Activated CD8-positive, alpha-beta T cell treated with anti-CD3 and anti-CD28 coated beads for 36 hours (primary cell): ENCODE measurements at regions of chr2 and their contacts with region 1.

Region 1: DNA sequence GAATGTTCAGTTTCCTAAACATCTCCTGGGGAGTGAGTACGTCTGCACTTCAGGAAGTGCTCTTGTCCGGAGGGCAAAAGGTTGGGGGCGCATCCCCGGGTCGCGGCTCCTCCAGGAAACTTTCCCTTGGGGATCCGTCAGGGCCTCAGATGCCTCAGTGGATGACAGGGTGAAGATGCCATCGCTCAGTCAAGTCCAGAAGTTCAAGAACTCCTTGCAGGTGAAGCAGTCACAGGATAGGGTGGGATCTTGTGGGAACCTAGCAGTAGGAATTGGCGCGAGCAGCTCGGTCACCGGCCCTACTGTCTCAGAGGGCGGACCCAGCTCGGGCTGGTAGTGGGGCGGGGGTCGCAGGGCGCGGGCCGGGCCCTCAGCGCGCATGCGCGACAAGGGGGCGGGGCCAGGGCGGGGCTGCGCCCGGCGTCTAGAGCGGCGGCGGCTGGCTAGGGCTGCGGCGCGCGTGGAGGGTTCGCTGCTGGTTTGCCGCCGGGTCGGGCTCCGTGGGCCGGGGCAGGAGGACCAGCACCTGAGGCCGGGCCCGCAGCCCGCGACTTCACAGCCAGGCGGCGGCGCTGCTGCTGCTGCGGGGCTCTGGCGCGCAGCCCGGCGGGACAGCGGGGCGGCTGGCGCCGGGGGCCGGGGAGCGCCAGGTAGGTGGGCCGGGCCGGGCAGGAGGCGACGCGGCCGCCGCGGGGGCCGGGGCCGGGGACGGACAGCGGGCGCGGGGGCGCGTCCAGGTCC is at the start of gene INPP4A:
- DNase-seq: peak; percentile 73
- ATAC-seq: peak; percentile 73
- H3K4me3 Mint-ChIP-seq: peak within 1 kb of the TSS; percentile 81
- H3K27ac Mint-ChIP-seq: peak within 1 kb of the TSS; percentile 90
- H3K4me1 Mint-ChIP-seq: peaks cover 34% of the 10 kb centered on the region
- H3K27me3 Mint-ChIP-seq: no peaks in the 10 kb centered on the region
- CTCF ChIP-seq: no peak
- total RNA-seq, gene INPP4A: 46.7 to 46.9 TPM

Region 2: DNA sequence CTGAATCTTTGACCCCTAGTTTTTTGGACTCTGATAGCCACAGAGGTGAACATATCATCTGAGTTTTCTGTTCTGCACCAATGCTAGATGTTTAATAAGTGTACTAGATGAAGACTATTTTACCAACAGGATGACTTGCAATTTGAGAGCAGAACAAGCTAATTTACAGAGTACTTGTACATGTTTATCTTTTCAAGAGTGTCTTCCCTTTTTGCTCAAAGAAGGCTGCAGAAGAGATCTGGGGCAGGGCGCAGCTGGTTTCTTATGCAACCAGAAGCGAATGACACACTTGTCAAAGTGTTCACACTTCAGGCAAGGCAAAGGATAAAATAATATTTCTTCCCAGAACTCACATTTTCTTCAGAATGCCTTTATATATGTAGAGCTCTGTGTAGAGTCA is 271.7 kb before region 1 on chr2:
- CTCF ChIA-PET with region 1: no interaction called
- POLR2A ChIA-PET with region 1: no interaction called
- intact Hi-C with region 1: no loop called
- DNase-seq: no peak
- ATAC-seq: no peak
- H3K4me3 Mint-ChIP-seq: no peak overlapping the region
- H3K27ac Mint-ChIP-seq: no peak overlapping the region
- H3K4me1 Mint-ChIP-seq: no peaks in the 10 kb centered on the region
- H3K27me3 Mint-ChIP-seq: peaks cover 40% of the 10 kb centered on the region
- CTCF ChIP-seq: no peak

Region 3: GRCh38 chr2:98455494-98455976 is 10.9 kb after region 1 on chr2:
- CTCF ChIA-PET with region 1: interaction called, 19 read pairs
- POLR2A ChIA-PET with region 1: interaction called, 10 read pairs
- intact Hi-C with region 1: no loop called
- DNase-seq: peak; percentile 53
- ATAC-seq: peak; percentile 50
- H3K4me3 Mint-ChIP-seq: peak overlapping the region; percentile 65
- H3K27ac Mint-ChIP-seq: peak overlapping the region; percentile 92
- H3K4me1 Mint-ChIP-seq: peaks cover 95% of the 10 kb centered on the region
- H3K27me3 Mint-ChIP-seq: no peaks in the 10 kb centered on the region
- CTCF ChIP-seq: no peak

Region 4: DNA sequence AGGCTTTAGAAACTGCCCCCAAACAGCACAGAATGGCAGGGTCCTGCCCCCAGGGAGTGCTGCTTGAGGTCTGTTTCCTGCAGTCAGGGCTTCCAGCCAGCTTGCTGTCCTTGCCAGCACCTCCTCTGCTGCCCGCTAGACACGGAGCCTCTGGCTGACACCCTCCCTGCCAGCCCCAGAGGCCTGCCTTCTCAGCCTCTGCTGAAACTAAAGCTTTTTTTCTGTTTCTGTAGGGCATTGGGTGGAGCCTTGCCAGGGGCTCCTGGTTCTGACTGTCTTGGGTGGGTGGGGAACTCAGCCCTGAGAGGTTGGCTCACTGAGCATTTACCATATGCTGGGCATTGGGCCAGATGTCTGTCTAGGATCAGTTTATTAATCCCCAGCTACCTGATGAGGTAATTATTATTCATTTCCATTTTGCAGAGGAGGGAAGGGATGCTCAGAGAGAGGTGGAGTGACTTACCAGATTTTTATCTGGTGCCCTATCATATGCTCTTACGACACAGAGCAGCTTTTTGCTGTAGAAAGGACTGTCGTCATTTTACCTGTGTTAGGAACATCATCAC is 35.4 kb after region 1 on chr2:
- CTCF ChIA-PET with region 1: interaction called, 5 read pairs
- POLR2A ChIA-PET with region 1: interaction called, 7 read pairs
- intact Hi-C with region 1: loop called (anchors 5 kb)
- DNase-seq: peak; percentile 76
- ATAC-seq: peak; percentile 72
- H3K4me3 Mint-ChIP-seq: peak overlapping the region; percentile 30
- H3K27ac Mint-ChIP-seq: peak overlapping the region; percentile 91
- H3K4me1 Mint-ChIP-seq: peaks cover 98% of the 10 kb centered on the region
- H3K27me3 Mint-ChIP-seq: no peaks in the 10 kb centered on the region
- CTCF ChIP-seq: no peak